ENCODE measurements at regions of chr2 and their contacts with region 1.

Region 1: GRCh38 chr2:86079981-86080911 is 25.4 kb downstream of the POLR1A start:
- DNase-seq: peak; percentile 79 to 87 (median 82)
- H3K4me3 ChIP-seq: no peak overlapping the region
- H3K4me3 Mint-ChIP-seq: peak overlapping the region in 7 of 8 donors; percentile 18 to 74 (median 57)
- H3K27ac ChIP-seq: peak overlapping the region; percentile 64
- H3K27ac Mint-ChIP-seq: peak overlapping the region; percentile 85 to 96 (median 95)
- H3K4me1 ChIP-seq: peaks cover 21% of the 10 kb centered on the region
- H3K4me1 Mint-ChIP-seq: peaks cover 15 to 54% (median 37%) of the 10 kb centered on the region in 4 donors
- H3K27me3 ChIP-seq: no peaks in the 10 kb centered on the region
- H3K27me3 Mint-ChIP-seq: no peaks in the 10 kb centered on the region

Region 2: DNA sequence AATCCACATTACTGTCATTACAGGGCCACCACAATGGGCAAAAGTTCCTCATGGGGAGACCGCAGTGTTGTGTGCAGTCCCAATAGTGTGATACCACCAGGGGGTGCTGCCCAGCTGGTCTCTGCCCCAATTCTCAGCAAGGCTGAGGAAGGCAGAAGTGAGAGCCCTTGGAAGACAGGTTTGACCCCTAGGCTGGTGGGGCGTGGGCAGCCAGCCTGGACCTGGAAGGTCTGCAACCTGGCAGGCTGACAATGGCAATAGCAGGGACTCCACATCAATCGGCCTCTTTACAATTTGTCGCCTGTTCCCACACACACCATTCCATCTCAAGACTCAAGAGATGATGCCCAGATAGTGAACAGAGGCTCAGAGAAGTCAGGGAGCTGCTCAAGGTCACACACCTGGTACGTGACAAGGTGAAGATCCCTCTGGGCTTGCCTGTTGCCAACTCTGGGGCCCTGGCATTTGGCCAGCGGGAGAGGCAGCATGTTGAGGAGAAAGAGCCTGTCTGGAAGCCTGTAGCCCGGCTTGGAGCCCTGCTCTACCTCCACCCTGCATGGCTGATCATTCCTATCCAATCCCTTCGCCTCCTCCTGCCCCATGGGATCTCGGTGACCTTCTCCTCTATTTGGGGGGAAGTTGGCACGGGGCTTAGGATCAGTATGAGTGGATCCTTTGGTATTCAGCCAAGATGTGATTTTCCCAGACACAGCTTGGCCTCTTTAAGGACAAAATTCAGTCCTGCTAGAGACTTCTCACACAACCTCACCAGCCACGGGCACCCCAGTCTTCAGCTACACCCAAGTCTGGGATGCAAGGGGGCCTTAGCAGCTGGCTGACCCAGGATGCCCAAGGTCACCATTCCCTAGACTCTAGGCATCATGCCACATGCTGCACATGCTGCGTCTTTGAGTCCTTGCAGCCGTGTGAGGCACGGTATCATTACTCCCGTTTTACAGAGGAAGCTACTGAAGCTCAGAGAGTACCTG is 329.4 kb before region 1 on chr2:
- CTCF ChIA-PET with region 1: interaction called, 3 read pairs
- POLR2A ChIA-PET with region 1: no interaction called
- intact Hi-C with region 1: loop called (anchors 1 kb)
- DNase-seq: peak in 4 of 5 donors; percentile 31 to 46 (median 44)
- H3K4me3 ChIP-seq: no peak overlapping the region
- H3K4me3 Mint-ChIP-seq: peak overlapping the region in 4 of 8 donors; percentile 9 to 71 (median 24)
- H3K27ac ChIP-seq: no peak overlapping the region
- H3K27ac Mint-ChIP-seq: no peak overlapping the region
- H3K4me1 ChIP-seq: peaks cover 17% of the 10 kb centered on the region
- H3K4me1 Mint-ChIP-seq: peaks cover 5 to 30% (median 12%) of the 10 kb centered on the region in 4 donors
- H3K27me3 ChIP-seq: peaks cover 23% of the 10 kb centered on the region
- H3K27me3 Mint-ChIP-seq: peaks cover 32 to 60% of the 10 kb centered on the region in 2 donors

Region 3: DNA sequence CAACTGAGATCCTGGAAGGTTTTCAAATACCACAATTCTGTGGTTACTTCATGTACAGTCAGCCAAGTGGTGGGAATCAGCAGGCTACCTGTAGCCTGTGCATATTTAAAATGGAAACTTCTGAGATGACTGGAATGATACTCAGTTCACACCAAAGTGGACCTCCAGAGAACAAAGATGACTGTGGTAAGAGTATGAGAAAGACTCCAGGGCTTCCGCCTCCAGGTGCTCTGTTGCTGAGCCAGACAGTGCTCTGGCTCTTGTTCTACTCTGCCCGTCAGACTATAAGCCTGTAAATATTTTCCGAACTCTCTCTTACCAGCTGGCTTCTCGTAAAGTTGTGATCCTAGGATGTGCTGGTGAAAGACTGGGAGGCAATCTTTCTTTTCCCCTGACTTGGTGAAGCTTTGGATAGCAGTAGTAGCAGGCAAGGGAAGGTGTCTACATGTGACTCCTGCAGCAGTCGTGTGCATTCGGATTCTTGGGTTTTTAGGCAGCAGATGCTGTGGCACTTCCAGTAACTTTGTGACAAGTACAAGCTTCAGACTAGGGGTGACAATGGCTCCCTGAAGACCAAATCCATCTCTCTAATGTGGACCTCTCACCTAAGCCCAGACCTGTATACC is 214.6 kb before region 1 on chr2:
- CTCF ChIA-PET with region 1: interaction called, 12 read pairs
- POLR2A ChIA-PET with region 1: interaction called, 5 read pairs
- intact Hi-C with region 1: no loop called
- DNase-seq: peak in 1 of 5 donors; percentile 44
- H3K4me3 ChIP-seq: no peak overlapping the region
- H3K4me3 Mint-ChIP-seq: peak overlapping the region in 7 of 8 donors; percentile 14 to 64 (median 48)
- H3K27ac ChIP-seq: peak overlapping the region; percentile 13
- H3K27ac Mint-ChIP-seq: peak overlapping the region; percentile 55 to 89 (median 79)
- H3K4me1 ChIP-seq: peaks cover 55% of the 10 kb centered on the region
- H3K4me1 Mint-ChIP-seq: peaks cover 46 to 85% (median 63%) of the 10 kb centered on the region in 4 donors
- H3K27me3 ChIP-seq: no peaks in the 10 kb centered on the region
- H3K27me3 Mint-ChIP-seq: no peaks in the 10 kb centered on the region

Region 4: GRCh38 chr2:86025229-86025820 is 54.9 kb before region 1 on chr2:
- CTCF ChIA-PET with region 1: interaction called, 15 read pairs
- POLR2A ChIA-PET with region 1: no interaction called
- intact Hi-C with region 1: no loop called
- DNase-seq: no peak
- H3K4me3 ChIP-seq: no peak overlapping the region
- H3K4me3 Mint-ChIP-seq: no peak overlapping the region
- H3K27ac ChIP-seq: no peak overlapping the region
- H3K27ac Mint-ChIP-seq: peak overlapping the region in 3 of 7 donors; percentile 16 to 48 (median 23)
- H3K4me1 ChIP-seq: no peaks in the 10 kb centered on the region
- H3K4me1 Mint-ChIP-seq: peaks cover 0 to 6% (median under 1%) of the 10 kb centered on the region in 4 donors
- H3K27me3 ChIP-seq: no peaks in the 10 kb centered on the region
- H3K27me3 Mint-ChIP-seq: no peaks in the 10 kb centered on the region

Region 5: GRCh38 chr2:86068136-86068588 is 12.1 kb before region 1 on chr2:
- CTCF ChIA-PET with region 1: interaction called, 26 read pairs
- POLR2A ChIA-PET with region 1: no interaction called
- intact Hi-C with region 1: loop called (anchors 2 kb)
- DNase-seq: peak; percentile 25 to 72 (median 33)
- H3K4me3 ChIP-seq: no peak overlapping the region
- H3K4me3 Mint-ChIP-seq: peak overlapping the region in 3 of 8 donors; percentile 8 to 60 (median 56)
- H3K27ac ChIP-seq: no peak overlapping the region
- H3K27ac Mint-ChIP-seq: peak overlapping the region in 6 of 7 donors; percentile 19 to 72 (median 49)
- H3K4me1 ChIP-seq: peaks cover 18% of the 10 kb centered on the region
- H3K4me1 Mint-ChIP-seq: peaks cover 9 to 21% (median 12%) of the 10 kb centered on the region in 4 donors
- H3K27me3 ChIP-seq: no peaks in the 10 kb centered on the region
- H3K27me3 Mint-ChIP-seq: no peaks in the 10 kb centered on the region

Region 6: GRCh38 chr2:86135653-86136052 is 55.4 kb after region 1 on chr2:
- CTCF ChIA-PET with region 1: no interaction called
- POLR2A ChIA-PET with region 1: no interaction called
- intact Hi-C with region 1: no loop called
- DNase-seq: no peak
- H3K4me3 ChIP-seq: no peak overlapping the region
- H3K4me3 Mint-ChIP-seq: no peak overlapping the region
- H3K27ac ChIP-seq: no peak overlapping the region
- H3K27ac Mint-ChIP-seq: peak overlapping the region in 5 of 7 donors; percentile 4 to 55 (median 24)
- H3K4me1 ChIP-seq: no peaks in the 10 kb centered on the region
- H3K4me1 Mint-ChIP-seq: peaks cover 8 to 20% (median 12%) of the 10 kb centered on the region in 4 donors
- H3K27me3 ChIP-seq: no peaks in the 10 kb centered on the region
- H3K27me3 Mint-ChIP-seq: no peaks in the 10 kb centered on the region

Measured in CD4-positive, alpha-beta memory T cell (primary cell).